AG04450 (cell line): ENCODE measurements at regions of chr2 and their contacts with region 1.

Region 1: DNA sequence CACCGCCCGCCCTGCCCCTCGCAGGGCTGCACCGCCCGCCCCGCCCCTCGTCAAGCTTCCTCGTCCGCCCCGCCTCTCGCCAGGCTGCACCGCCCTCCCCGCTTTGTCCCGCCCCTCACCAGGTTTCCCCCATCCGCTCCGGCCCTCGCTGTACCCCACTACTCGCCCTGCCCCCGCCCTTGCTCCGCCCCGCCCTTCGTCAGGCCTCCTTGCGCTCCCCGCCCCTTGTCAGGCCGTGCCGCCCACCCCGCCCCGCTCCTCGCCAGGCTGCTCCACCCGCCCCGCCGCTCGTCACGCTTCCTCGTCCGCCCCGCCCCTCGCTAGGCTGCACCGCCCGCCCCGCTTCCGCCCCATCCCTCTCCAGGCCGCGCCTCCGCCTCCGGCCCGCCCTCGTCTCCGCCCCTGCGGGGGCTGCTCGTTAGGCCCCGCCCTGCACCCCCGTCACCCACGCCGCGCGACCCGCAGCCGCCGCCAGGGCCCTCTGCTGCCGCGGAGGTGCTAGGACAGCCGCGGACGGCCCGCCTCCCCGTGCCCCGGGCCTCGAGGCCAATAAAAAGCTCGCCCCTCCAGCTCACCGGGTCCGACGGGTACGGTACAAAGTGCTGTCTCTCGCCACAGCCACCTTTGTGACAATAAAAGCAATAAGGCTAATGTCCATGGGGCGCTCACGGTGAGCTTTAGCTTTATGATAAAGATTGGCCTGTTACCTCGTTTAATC is 574 bp upstream of the DNPEP start:
- DNase-seq: peak; percentile 96
- H3K4me3 ChIP-seq: peak overlapping the region; percentile 49
- H3K27ac ChIP-seq: no peak overlapping the region
- H3K27me3 ChIP-seq: peaks cover 8% of the 10 kb centered on the region
- CTCF ChIP-seq: peak; percentile 46

Region 2: DNA sequence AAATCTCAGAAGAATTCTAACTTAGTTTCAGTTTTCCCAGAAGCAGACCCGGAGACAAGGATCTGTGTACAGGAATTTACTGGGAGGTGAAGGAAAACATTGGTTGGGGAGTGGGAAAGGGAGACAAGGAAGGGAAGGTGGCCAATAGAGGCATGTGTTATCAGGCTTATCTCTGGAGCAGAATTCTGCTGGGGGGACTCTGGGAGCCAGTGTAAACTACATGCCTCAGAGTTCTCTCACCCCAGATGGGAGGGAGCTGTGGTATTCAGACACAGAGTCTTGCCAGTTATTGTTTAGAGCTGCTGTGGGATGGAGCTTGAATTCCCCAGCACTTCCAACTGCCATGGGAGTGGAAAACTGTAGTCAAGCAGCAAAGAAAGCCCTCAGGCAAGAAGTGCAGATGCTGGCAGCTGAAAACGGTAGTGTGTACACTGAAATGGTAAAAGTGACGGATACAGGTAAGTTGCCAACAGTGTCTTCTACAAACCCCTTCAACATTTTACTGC is 19.5 kb before region 1 on chr2:
- CTCF ChIA-PET with region 1: interaction called, 3 read pairs
- POLR2A ChIA-PET with region 1: interaction called, 14 read pairs
- DNase-seq: peak; percentile 62
- H3K4me3 ChIP-seq: peak overlapping the region; percentile 31; the same call in 1 of the 2 replicates
- H3K27ac ChIP-seq: peak overlapping the region; percentile 81
- H3K27me3 ChIP-seq: no peaks in the 10 kb centered on the region
- CTCF ChIP-seq: no peak

Region 3: DNA sequence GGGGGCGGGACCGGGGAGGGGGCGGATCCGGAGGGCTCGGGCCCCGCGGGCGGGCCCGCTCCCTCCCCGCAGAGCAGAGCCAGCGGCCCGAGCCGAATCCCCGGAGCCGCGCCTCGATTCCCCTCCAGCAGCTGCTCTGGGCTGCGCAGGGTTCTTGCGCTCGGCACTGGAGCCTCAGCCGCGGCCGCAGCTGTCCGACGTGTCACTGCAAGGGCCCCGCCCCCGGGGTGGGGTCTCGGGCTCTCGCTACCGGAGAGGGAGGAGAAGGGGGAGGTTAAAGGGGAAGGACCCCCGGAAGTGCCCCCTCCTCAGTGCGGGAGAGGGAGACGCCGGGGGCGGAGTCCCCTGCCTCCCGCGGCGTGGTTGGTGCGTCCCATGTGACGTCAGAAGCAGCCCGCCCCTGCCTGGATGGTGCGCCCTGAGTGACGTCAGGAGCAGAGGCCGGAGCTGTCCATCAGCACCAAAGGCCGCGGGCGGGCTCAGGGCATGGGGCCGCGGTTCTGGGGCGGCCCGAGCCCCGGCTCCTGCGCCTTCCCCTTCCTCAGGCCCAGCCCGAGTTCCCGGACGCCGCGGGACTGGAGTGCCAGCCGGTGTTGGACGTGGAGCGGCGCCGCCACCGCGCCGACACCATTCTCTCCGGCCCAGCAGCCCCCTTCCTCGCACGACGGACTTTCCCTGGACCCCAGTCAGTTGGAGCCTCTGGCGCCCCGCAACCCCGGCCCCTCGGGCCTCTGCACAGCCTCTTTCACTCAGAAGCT is 155.5 kb after region 1 on chr2 and contains the starts of genes CHPF and TMEM198:
- CTCF ChIA-PET with region 1: no interaction called
- POLR2A ChIA-PET with region 1: no interaction called
- DNase-seq: peak; percentile 95
- H3K4me3 ChIP-seq: peak within 1 kb of the TSS; percentile 75
- H3K27ac ChIP-seq: peak within 1 kb of the TSS; percentile 78
- H3K27me3 ChIP-seq: no peaks in the 10 kb centered on the region
- CTCF ChIP-seq: no peak
- polyA plus RNA-seq, gene CHPF: 24.4 and 37.2 TPM in 2 replicates
- polyA plus RNA-seq, gene TMEM198: 0.83 and 1.2 TPM in 2 replicates

Region 4: GRCh38 chr2:220569112-220569897 is 1181.0 kb after region 1 on chr2:
- CTCF ChIA-PET with region 1: no interaction called
- POLR2A ChIA-PET with region 1: no interaction called
- DNase-seq: no peak
- H3K4me3 ChIP-seq: no peak overlapping the region
- H3K27ac ChIP-seq: no peak overlapping the region
- H3K27me3 ChIP-seq: no peaks in the 10 kb centered on the region
- CTCF ChIP-seq: no peak